ENCODE measurements at regions of chr20 and their contacts with region 1.

Region 1: DNA sequence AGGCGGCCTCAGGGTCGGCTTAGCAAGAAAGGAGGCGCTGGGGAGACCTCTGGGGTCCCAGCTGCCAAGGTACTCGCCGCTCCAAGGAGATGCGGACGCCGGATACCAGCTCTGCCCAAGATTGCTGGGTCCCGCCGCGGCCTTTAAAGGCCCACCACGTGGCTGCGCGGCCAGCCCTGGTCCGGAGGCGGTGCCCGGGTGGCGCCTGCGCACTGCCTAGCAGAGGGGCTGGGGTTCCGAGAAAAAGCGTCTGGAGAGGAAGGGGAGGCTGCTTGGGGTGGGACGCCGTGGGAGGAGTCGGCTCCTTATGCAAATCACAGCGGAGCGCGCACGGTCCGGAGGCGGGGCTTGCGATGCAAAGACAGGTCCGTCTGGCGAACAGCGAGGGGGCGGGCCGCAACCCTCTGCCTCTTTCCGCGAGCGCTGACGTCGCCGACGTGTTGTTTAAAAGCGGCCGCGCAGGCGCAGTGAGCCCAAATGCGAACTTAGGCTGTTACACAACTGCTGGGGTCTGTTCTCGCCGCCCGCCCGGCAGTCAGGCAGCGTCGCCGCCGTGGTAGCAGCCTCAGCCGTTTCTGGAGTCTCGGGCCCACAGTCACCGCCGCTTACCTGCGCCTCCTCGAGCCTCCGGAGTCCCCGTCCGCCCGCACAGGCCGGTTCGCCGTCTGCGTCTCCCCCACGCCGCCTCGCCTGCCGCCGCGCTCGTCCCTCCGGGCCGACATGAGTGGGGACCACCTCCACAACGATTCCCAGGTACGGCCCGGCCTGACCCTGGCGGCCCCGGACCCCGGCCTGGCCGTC is at the start of gene TOP1:
- DNase-seq: peak; percentile 100
- H3K4me3 ChIP-seq: peak within 1 kb of the TSS; percentile 99
- H3K4me3 Mint-ChIP-seq: peak within 1 kb of the TSS; percentile 96
- H3K27ac Mint-ChIP-seq: peak within 1 kb of the TSS; percentile 100
- H3K4me1 ChIP-seq: peaks cover 40% of the 10 kb centered on the region
- H3K4me1 Mint-ChIP-seq: peaks cover 53% of the 10 kb centered on the region
- H3K27me3 ChIP-seq: no peaks in the 10 kb centered on the region
- H3K27me3 Mint-ChIP-seq: no peaks in the 10 kb centered on the region
- CTCF ChIP-seq: peak in 1 of 2 experiments; percentile 19
- total RNA-seq, gene TOP1: 142 and 144 TPM in 2 replicates

Region 2: GRCh38 chr20:41011551-41012067 is 16.9 kb before region 1 on chr20:
- CTCF ChIA-PET with region 1: interaction called, 3 read pairs
- POLR2A ChIA-PET with region 1: interaction called, 14 read pairs
- intact Hi-C with region 1: loop called (anchors 2 kb)
- DNase-seq: no peak
- H3K4me3 ChIP-seq: no peak overlapping the region
- H3K4me3 Mint-ChIP-seq: no peak overlapping the region
- H3K27ac Mint-ChIP-seq: peak overlapping the region; percentile 16
- H3K4me1 ChIP-seq: peaks cover 56% of the 10 kb centered on the region
- H3K4me1 Mint-ChIP-seq: peaks cover 57% of the 10 kb centered on the region
- H3K27me3 ChIP-seq: no peaks in the 10 kb centered on the region
- H3K27me3 Mint-ChIP-seq: no peaks in the 10 kb centered on the region
- CTCF ChIP-seq: no peak

Region 3: DNA sequence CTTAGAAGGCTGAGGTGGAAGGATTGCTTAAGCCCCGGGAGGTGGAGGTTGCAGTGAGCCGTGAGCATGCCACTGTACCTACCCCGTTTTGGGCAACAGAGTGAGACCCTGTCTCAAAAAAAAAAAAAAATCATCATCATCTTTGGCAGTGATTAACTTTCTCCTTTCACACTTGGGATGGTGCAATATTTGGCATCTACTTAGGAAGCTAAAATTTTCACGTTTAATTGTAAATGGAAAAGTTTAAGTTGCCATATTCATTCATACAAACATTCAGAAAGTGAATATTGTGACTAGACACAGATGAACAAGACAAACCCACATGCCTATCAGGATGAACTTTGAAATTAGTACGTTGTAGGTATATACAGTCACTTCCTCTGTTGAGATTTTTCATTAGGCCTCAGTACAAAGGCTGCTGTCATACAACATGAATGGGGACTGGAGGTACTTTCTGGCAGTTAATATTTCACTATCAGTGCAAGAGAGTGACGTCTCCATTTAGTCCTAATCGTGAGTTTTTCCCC is 10.4 kb after region 1 on chr20:
- CTCF ChIA-PET with region 1: no interaction called
- POLR2A ChIA-PET with region 1: no interaction called
- intact Hi-C with region 1: loop called (anchors 1 kb)
- DNase-seq: no peak
- H3K4me3 ChIP-seq: no peak overlapping the region
- H3K4me3 Mint-ChIP-seq: no peak overlapping the region
- H3K27ac Mint-ChIP-seq: no peak overlapping the region
- H3K4me1 ChIP-seq: peaks cover 51% of the 10 kb centered on the region
- H3K4me1 Mint-ChIP-seq: peaks cover 30% of the 10 kb centered on the region
- H3K27me3 ChIP-seq: no peaks in the 10 kb centered on the region
- H3K27me3 Mint-ChIP-seq: no peaks in the 10 kb centered on the region
- CTCF ChIP-seq: no peak

Region 4: DNA sequence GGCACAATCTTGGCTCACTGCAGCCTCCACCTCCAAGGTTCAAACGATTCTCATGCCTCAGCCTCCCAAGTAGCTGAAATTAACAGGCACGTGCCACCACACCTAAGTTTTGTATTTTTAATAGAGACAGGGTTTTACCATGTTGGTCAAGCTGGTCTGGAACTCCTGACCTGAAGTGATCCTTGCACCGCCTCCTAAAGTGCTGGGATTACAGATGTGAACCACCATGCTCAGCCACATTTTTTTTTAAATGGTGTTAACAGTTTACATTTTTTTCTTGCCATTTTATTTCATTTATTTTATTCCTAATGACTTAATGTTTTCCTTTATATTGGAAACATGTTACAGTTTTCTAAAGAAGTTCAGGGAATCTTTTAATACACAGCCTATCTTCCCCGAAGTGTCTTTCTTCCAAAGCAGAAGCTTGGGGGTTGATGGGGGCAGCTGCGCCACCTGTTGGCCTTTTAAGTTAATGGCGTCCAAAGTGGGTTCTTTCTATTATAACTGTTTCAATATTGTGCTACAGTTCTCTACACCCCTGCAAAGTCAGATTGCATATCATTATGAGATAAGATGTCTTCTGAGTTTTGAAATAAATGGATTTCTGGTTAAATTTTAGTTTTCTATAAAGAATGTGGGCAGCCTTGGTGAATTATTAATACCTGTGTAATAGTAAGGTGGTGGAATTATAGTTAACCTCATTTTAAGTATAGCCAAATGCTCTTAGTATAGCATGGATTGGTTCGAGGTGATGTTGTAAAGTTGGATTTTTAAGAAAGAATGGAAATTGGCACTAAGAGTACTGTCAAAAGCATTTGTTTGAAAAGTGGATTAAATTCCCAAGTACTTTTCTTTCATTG is 66.8 kb after region 1 on chr20:
- CTCF ChIA-PET with region 1: interaction called, 4 read pairs
- POLR2A ChIA-PET with region 1: no interaction called
- intact Hi-C with region 1: loop called (anchors 1 kb)
- DNase-seq: peak; percentile 66 to 75
- H3K4me3 ChIP-seq: no peak overlapping the region
- H3K4me3 Mint-ChIP-seq: no peak overlapping the region
- H3K27ac Mint-ChIP-seq: no peak overlapping the region
- H3K4me1 ChIP-seq: no peaks in the 10 kb centered on the region
- H3K4me1 Mint-ChIP-seq: no peaks in the 10 kb centered on the region
- H3K27me3 ChIP-seq: no peaks in the 10 kb centered on the region
- H3K27me3 Mint-ChIP-seq: no peaks in the 10 kb centered on the region
- CTCF ChIP-seq: peak; percentile 98 to 99